ENCODE measurements at regions of chr5 and their contacts with region 1.

Region 1: DNA sequence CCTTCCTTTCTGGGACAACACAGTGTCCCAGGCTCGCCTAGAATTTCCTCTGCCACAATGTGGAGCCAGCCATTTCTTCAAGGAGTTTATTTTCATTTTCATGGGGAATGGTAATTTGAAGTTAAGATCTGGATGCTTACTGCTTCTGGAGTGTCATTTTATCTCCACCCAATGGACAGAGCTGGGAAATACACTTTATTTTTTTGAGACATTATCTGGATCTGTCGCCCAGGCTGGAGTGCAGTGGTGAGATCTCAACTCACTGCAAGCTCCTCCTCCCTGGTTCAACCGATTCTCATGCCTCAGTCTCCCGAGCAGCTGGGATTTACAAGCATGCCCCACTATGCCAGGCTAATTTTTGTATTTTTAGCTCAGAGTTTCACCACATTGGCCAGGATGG is 12.7 kb upstream of the THG1L start:
- DNase-seq: peak; percentile 69
- H3K4me3 Mint-ChIP-seq: no peak overlapping the region
- H3K27ac Mint-ChIP-seq: no peak overlapping the region
- H3K4me1 Mint-ChIP-seq: no peaks in the 10 kb centered on the region
- H3K27me3 Mint-ChIP-seq: no peaks in the 10 kb centered on the region
- CTCF ChIP-seq: peak; percentile 83

Region 2: DNA sequence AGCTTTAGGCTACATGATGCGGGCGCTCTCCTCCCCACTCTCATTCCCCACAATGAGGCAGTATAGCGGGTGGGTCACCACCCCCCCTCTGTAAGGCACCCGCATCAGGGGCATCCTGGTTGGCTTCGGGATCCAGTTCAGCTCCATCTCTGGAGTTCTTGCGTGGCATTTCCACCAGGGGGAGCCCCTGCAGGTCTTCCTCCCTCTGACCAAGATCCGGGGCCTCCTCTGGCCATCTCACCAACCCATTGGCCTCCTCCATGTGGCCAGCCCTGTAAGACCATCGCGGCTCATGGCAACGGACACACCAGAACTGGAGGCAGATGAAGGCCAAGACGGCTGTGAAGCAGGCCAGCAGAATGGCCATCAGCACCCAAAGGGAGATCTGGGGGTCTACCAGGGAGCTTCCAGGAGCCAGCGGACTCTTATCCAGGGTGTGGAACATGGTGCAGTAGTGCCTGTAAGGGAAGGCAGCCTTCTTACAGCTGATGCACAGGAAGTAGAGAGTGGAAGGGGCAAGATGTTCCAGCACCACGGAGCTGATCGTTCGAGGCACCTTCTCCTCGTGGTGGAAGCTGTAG is 375.6 kb before region 1 on chr5:
- CTCF ChIA-PET with region 1: interaction called, 38 read pairs
- POLR2A ChIA-PET with region 1: no interaction called
- intact Hi-C with region 1: loop called (anchors 5 kb)
- DNase-seq: peak; percentile 66
- H3K4me3 Mint-ChIP-seq: no peak overlapping the region
- H3K27ac Mint-ChIP-seq: no peak overlapping the region
- H3K4me1 Mint-ChIP-seq: no peaks in the 10 kb centered on the region
- H3K27me3 Mint-ChIP-seq: no peaks in the 10 kb centered on the region
- CTCF ChIP-seq: peak; percentile 82

Region 3: GRCh38 chr5:157431544-157432200 is 286.8 kb before region 1 on chr5:
- CTCF ChIA-PET with region 1: interaction called, 137 read pairs
- POLR2A ChIA-PET with region 1: no interaction called
- intact Hi-C with region 1: loop called (anchors 1 kb)
- DNase-seq: peak; percentile 82
- H3K4me3 Mint-ChIP-seq: no peak overlapping the region
- H3K27ac Mint-ChIP-seq: no peak overlapping the region
- H3K4me1 Mint-ChIP-seq: no peaks in the 10 kb centered on the region
- H3K27me3 Mint-ChIP-seq: no peaks in the 10 kb centered on the region
- CTCF ChIP-seq: peak; percentile 69

Region 4: DNA sequence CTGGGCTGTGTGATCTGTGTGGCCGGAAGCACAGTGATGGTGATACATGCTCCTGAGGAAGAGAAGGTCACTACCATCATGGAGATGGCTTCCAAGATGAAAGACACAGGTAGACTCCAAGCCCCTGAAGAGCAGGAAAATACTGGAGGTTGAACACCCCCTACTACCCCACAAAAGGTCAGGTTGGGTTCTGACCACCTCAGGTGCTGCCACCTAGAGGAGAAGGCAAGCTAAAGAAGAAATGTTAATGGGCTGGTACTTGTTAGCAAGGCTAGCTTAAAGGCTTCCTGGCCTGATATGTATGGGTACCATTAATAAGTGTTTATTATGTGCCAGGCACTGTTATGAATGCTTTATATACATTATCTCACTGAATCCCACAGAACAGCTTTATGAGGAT is 246.8 kb before region 1 on chr5:
- CTCF ChIA-PET with region 1: interaction called, 113 read pairs
- POLR2A ChIA-PET with region 1: no interaction called
- intact Hi-C with region 1: no loop called
- DNase-seq: peak; percentile 64
- H3K4me3 Mint-ChIP-seq: no peak overlapping the region
- H3K27ac Mint-ChIP-seq: no peak overlapping the region
- H3K4me1 Mint-ChIP-seq: no peaks in the 10 kb centered on the region
- H3K27me3 Mint-ChIP-seq: no peaks in the 10 kb centered on the region
- CTCF ChIP-seq: peak; percentile 81

Region 5: GRCh38 chr5:157486221-157486681 is 232.3 kb before region 1 on chr5:
- CTCF ChIA-PET with region 1: interaction called, 15 read pairs
- POLR2A ChIA-PET with region 1: no interaction called
- intact Hi-C with region 1: no loop called
- DNase-seq: no peak
- H3K4me3 Mint-ChIP-seq: no peak overlapping the region
- H3K27ac Mint-ChIP-seq: no peak overlapping the region
- H3K4me1 Mint-ChIP-seq: peaks cover 5% of the 10 kb centered on the region
- H3K27me3 Mint-ChIP-seq: no peaks in the 10 kb centered on the region
- CTCF ChIP-seq: no peak

Region 6: DNA sequence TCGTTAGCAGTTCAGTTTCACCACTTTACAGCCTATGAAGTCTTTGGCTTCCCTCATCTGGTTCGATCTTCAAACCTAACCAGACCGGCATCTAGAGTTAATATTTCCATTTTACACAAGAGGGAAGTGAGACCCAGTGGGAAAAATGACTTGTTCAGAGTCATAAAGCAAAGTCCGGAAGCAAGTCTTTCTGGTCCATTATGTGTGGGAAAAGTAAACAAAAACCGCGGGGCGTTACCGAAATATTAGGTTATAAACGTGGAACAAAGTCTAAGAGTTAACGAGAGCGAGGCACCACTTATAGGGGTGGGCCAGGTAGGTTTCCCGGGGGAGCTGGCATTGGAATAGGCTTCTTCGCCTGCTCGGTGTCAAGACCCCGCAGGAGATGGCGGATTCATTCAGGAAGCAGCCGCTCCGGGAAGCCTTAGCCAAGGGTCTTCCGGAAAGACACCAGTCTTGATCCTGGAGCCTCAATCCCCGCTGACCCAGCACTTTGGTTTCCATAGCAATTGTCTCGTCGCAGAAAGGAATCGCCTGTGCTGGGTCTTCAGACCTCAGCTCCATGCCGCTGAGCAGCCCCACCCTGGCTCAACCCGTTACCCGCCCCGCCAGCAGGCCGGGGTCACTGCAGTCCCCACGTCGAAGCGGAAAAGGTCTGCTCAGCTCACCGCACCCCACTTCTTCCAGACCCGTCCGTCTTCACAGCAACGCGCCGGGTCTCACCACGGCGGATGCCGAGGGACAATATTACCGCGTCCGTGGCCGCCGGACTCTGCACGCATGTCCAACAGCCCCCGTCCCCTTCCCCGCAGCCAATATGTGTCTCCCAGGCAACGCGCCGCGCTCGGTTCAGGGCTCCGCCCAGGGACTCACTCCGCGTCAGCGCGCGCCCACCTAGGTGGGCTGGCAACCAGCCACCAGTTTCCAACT is 47.6 kb before region 1 on chr5 and contains the start of gene C5orf52:
- CTCF ChIA-PET with region 1: interaction called, 16 read pairs
- POLR2A ChIA-PET with region 1: no interaction called
- intact Hi-C with region 1: loop called (anchors 1 kb)
- DNase-seq: no peak
- H3K4me3 Mint-ChIP-seq: peak within 1 kb of the TSS; percentile 59
- H3K27ac Mint-ChIP-seq: peak within 1 kb of the TSS; percentile 49
- H3K4me1 Mint-ChIP-seq: peaks cover 10% of the 10 kb centered on the region
- H3K27me3 Mint-ChIP-seq: peaks cover 29% of the 10 kb centered on the region
- CTCF ChIP-seq: no peak
- total RNA-seq, gene C5orf52: not detected in 2 replicates

Region 7: DNA sequence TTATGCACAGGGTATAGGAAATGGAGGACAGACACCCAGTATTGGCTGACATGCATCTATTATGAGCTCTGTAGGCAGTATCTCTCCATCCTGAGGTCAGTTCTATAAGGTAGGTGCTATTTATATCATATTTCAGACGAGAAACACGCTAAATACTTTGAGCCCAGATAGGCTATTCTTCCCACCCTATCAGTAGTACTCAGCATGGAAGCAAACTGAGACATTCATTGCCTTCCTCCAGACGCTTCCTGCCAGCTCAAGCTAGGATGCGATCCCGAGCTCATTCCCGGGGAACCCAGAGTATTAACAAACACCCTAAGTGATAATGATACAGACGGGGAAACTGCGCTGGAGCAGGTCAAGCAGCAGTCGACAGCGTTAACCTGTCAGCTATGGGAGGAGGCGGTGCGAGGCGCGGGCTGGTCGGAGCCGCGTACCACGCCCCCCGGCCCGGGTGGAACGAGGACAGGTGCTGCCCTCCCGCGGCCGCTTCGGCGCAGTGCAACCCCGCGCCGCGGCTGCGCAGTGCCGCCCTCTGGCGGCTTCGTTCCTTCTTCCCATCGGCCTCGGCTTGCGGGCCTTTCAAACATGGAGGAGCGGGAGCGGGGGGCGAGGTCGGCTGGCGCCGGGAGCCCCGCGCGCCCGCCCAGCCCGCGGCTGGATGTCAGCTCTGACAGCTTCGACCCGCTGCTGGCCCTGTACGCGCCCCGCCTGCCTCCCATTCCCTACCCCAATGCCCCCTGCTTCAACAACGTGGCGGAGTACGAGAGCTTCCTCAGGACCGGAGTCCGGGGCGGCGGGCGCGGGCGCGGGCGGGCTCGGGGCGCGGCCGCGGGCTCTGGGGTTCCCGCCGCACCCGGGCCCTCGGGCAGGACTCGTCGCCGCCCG is 24.9 kb after region 1 on chr5 and contains the start of gene LSM11:
- CTCF ChIA-PET with region 1: interaction called, 46 read pairs
- POLR2A ChIA-PET with region 1: no interaction called
- intact Hi-C with region 1: no loop called
- DNase-seq: peak; percentile 90
- H3K4me3 Mint-ChIP-seq: peak within 1 kb of the TSS; percentile 78
- H3K27ac Mint-ChIP-seq: peak within 1 kb of the TSS; percentile 68
- H3K4me1 Mint-ChIP-seq: peaks cover 18% of the 10 kb centered on the region
- H3K27me3 Mint-ChIP-seq: no peaks in the 10 kb centered on the region
- CTCF ChIP-seq: peak; percentile 100
- total RNA-seq, gene LSM11: 3.4 and 4.5 TPM in 2 replicates